PC-3 (cell line): ENCODE measurements at regions of chr9 and their contacts with region 1.

Region 1: DNA sequence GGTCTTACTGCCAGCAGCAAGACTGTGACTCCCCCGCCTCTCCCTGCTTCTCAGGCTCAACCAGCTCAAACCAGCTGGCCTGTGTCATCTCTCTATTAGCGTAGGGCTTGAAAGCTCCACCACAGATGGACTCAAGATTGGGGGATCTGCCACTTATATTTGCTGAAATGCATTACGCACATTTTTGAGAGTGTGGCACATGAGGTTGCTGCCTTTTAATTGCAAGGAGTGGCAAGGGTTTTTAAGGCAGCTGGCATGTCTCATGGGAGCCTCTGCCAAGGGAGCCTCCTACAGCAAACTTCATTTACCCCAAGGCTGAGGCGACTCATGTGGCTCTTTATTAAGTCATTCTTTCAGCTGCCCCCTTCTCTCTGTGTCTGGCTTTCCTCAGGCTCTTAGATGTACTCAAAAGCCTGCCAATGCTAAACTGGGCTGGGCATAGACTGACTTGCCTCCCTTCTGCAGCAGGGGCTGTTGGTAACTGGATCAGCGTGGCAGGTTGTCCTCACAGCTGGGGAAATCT is 219.3 kb downstream of the SMARCA2 start:
- DNase-seq: peak; percentile 25
- ATAC-seq: peak; percentile 64
- H3K4me3 ChIP-seq: no peak overlapping the region
- H3K27ac ChIP-seq: no peak overlapping the region
- H3K4me1 ChIP-seq: peaks cover 4% of the 10 kb centered on the region; the same call in 1 of the 2 replicates
- H3K27me3 ChIP-seq: no peaks in the 10 kb centered on the region
- CTCF ChIP-seq: no peak

Region 2: GRCh38 chr9:1495282-1496030 is 739.0 kb before region 1 on chr9:
- CTCF ChIA-PET with region 1: no interaction called
- POLR2A ChIA-PET with region 1: no interaction called
- intact Hi-C with region 1: no loop called
- DNase-seq: no peak
- ATAC-seq: no peak
- H3K4me3 ChIP-seq: no peak overlapping the region
- H3K27ac ChIP-seq: no peak overlapping the region
- H3K4me1 ChIP-seq: peaks cover 4% of the 10 kb centered on the region; the same call in 1 of the 2 replicates
- H3K27me3 ChIP-seq: no peaks in the 10 kb centered on the region
- CTCF ChIP-seq: no peak

Region 3: GRCh38 chr9:2727966-2728613 is 493.7 kb after region 1 on chr9:
- CTCF ChIA-PET with region 1: no interaction called
- POLR2A ChIA-PET with region 1: no interaction called
- intact Hi-C with region 1: loop called (anchors 5 kb)
- DNase-seq: peak; percentile 69
- ATAC-seq: peak; percentile 78
- H3K4me3 ChIP-seq: no peak overlapping the region
- H3K27ac ChIP-seq: no peak overlapping the region
- H3K4me1 ChIP-seq: no peaks in the 10 kb centered on the region; the same call in 1 of the 2 replicates
- H3K27me3 ChIP-seq: no peaks in the 10 kb centered on the region
- CTCF ChIP-seq: peak; percentile 87